Activated T-helper 1 cell treated with anti-CD3 and anti-CD28 coated beads, Interleukin-12 subunit alpha, Interleukin-12 subunit beta, Interleukin-2, Interleukin-4 antibody, amounts not matched to agents 30 ng/mL and 10 ng/mL and 1 ng/mL, durations not matched to agents 14 hours and 24 hours and 36 hours (primary cell): ENCODE measurements at regions of chr4 and their contacts with region 1.

Region 1: GRCh38 chr4:130336585-130337217 is 1240.7 kb downstream of the C4orf33 start:
- DNase-seq: no peak
- H3K4me3 Mint-ChIP-seq: no peak overlapping the region
- H3K27ac Mint-ChIP-seq: no peak overlapping the region
- H3K4me1 Mint-ChIP-seq: no peaks in the 10 kb centered on the region
- H3K27me3 Mint-ChIP-seq: no peaks in the 10 kb centered on the region

Region 2: DNA sequence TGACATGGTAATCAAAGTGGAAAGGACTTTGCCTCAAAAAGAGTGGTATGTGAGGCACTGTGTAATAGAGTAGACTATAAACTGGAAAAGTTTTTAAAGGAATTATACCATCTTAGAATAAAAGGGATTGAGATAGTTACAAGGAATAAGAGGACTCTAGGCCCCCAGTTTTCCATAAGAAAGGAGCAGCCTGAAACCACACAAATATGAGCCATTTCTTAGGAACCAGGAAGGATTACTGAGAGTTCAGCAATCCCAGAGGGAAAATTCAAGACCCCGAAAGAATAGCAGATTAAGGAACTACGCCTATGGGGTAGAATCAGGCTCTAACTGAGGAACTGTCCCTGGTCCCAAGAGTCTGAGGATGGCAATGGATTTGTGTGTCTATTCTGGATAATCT is 27.5 kb before region 1 on chr4:
- intact Hi-C with region 1: loop called (anchors 2 kb)
- DNase-seq: no peak
- H3K4me3 Mint-ChIP-seq: no peak overlapping the region
- H3K27ac Mint-ChIP-seq: no peak overlapping the region
- H3K4me1 Mint-ChIP-seq: no peaks in the 10 kb centered on the region
- H3K27me3 Mint-ChIP-seq: no peaks in the 10 kb centered on the region